K562 (cell line): ENCODE measurements at regions of chr18 and their contacts with region 1.

Region 1: DNA sequence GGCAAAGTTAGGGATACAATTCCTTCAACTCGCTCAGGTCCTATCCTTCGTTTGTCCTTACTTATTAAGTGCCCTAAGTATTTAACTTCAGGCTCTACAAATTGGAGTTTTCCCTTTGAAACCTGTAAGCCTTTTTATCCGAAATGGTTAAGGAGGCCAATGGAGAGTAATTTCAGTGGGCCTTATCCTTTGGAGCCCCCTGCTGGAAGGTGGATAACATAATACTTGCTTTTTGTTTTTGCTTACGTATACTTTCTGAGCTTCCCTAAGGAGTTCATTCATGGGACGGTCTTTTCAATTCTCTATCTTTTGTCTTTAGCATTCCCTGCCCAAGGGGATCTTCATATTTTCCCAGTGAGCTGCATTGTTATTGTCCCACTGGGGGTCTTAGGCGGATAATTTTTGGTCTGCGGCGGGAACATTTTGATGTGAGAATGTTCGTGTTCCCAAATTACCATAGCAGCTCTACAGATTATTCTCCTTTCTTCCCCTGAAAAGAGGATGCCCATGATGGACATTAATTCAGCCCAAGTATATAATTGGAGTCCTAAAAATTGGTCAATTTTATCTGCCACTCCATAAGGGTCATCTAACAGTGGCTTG is 34.4 kb upstream of the TRAPPC8 start:
- DNase-seq: peak; percentile 60 to 76 (median 61)
- ATAC-seq: peak; percentile 95
- H3K4me3 ChIP-seq: no peak overlapping the region
- H3K27ac ChIP-seq: no peak overlapping the region
- H3K4me1 ChIP-seq: no peaks in the 10 kb centered on the region
- H3K27me3 ChIP-seq: peaks cover 0 to 4% of the 10 kb centered on the region in 2 experiments; a peak in 1 of 5 replicates
- CTCF ChIP-seq: peak; percentile 63 to 93 (median 77); a peak in 5 of 6 replicates
- EP300 ChIP-seq: no peak
- POLR2A ChIP-seq: no peak
- RAD21 ChIP-seq: peak; percentile 80 to 94

Region 2: GRCh38 chr18:31722369-31722957 is 254.9 kb before region 1 on chr18:
- CTCF ChIA-PET with region 1: no interaction called
- POLR2A ChIA-PET with region 1: no interaction called
- in situ Hi-C with region 1: no loop called
- intact Hi-C with region 1: loop called (anchors 5 kb)
- DNase-seq: peak; percentile 75 to 87 (median 80)
- ATAC-seq: peak; percentile 98
- H3K4me3 ChIP-seq: no peak overlapping the region
- H3K27ac ChIP-seq: no peak overlapping the region
- H3K4me1 ChIP-seq: peaks cover 0 to 6% of the 10 kb centered on the region in 2 experiments; a peak in 1 of 5 replicates
- H3K27me3 ChIP-seq: peaks cover 9 to 22% of the 10 kb centered on the region in 2 experiments; a peak in 4 of 5 replicates
- CTCF ChIP-seq: peak; percentile 79 to 91 (median 84)
- EP300 ChIP-seq: no peak
- POLR2A ChIP-seq: no peak
- RAD21 ChIP-seq: peak; percentile 79 to 90

Region 3: DNA sequence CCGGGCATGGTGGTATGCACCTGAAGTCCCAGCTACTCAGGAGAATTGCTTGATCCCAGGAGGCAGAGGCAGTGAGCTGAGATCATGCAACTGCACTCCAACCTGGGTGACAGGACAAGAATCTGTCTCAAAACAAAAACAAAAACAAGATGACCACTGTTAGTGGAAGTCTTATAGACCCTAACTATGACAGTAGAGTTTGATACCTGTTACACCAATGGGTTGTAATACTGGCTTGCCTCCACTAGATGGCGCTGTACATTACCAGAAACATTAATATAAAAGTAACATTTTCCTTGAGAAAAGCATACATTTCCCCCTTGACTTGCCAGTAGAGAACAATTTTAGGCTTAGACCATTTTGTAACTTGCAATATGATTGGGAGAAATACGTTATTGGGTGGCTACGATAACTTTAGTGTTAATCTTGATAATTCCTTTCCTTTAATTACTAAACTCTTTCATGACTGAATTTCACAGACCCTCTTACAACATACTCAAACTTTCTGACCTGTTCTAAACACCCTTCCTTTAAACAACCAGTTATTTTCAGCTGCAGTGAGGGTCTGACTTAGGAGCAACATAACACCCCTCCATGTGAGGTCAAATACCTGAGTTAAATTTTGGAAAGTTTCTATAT is 236.2 kb before region 1 on chr18:
- CTCF ChIA-PET with region 1: interaction called, 3 read pairs
- POLR2A ChIA-PET with region 1: no interaction called
- in situ Hi-C with region 1: no loop called
- intact Hi-C with region 1: loop called (anchors 1 kb)
- DNase-seq: peak; percentile 31 to 66 (median 33)
- ATAC-seq: peak; percentile 70
- H3K4me3 ChIP-seq: no peak overlapping the region
- H3K27ac ChIP-seq: no peak overlapping the region
- H3K4me1 ChIP-seq: peaks cover 0 to 7% of the 10 kb centered on the region in 2 experiments; a peak in 2 of 5 replicates
- H3K27me3 ChIP-seq: peaks cover under 1 to 8% of the 10 kb centered on the region in 2 experiments; a peak in 3 of 5 replicates
- CTCF ChIP-seq: peak; percentile 46 to 85 (median 82)
- EP300 ChIP-seq: no peak
- POLR2A ChIP-seq: no peak
- RAD21 ChIP-seq: peak; percentile 62 to 82

Region 4: DNA sequence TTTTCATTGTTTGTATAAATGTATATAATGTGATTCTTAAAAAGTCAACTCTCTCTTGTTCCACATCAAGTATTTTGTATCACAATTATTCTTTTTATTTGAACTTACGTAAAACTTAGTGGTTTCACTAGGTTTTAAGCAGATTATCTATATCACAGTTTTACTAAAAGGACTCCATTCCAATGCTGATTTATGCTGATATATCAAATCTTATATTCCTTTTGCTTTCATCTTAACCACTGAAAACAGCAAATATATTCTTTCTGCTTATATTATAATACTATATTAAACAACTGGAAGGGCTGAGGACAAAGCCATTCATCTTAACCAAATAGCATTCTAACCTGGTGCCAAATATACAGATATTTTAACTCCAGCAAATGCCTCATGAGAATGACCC is 58.6 kb before region 1 on chr18:
- CTCF ChIA-PET with region 1: no interaction called
- POLR2A ChIA-PET with region 1: no interaction called
- in situ Hi-C with region 1: no loop called
- intact Hi-C with region 1: loop called (anchors 10 kb)
- DNase-seq: no peak
- ATAC-seq: no peak
- H3K4me3 ChIP-seq: no peak overlapping the region
- H3K27ac ChIP-seq: no peak overlapping the region
- H3K4me1 ChIP-seq: no peaks in the 10 kb centered on the region; a peak in 1 of 5 replicates
- H3K27me3 ChIP-seq: no peaks in the 10 kb centered on the region
- CTCF ChIP-seq: no peak
- EP300 ChIP-seq: no peak
- POLR2A ChIP-seq: no peak
- RAD21 ChIP-seq: no peak

Region 5: DNA sequence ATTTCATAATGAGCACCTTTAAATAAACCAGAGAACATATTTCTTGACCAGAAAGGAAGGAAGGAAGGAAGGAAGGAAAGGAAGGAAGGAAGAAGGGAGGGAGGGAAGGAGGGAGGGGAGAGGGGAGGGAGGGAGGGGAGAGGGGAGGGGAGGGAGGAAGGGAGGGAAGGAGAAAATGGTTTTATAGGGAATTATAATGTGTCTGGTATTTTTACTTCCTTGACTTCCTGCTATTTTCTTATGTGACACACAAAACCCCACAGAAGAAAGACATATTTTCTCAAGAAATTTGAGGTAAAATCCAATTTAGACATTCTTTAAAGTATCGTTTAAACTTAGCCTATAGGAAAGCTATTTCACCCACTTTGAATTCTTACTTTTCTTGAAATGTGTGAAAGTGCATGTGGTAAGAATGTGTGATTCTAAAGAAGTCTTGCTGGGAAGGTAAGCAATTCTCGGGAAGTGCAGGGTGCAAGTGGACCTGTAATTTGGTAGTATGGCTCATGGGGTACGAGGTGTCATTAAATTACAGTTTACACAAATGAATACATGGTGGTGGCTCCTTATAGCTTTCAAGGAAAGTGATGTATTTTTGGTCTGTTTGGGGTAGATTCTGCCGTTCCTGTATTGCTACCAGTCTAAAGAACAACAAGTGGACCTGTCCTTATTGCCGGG is 59.3 kb after region 1 on chr18:
- CTCF ChIA-PET with region 1: no interaction called
- POLR2A ChIA-PET with region 1: no interaction called
- in situ Hi-C with region 1: no loop called
- intact Hi-C with region 1: no loop called
- DNase-seq: no peak
- ATAC-seq: no peak
- H3K4me3 ChIP-seq: no peak overlapping the region
- H3K27ac ChIP-seq: no peak overlapping the region
- H3K4me1 ChIP-seq: no peaks in the 10 kb centered on the region
- H3K27me3 ChIP-seq: peaks cover 19 to 26% of the 10 kb centered on the region in 2 experiments; a peak in 4 of 5 replicates
- CTCF ChIP-seq: no peak
- EP300 ChIP-seq: no peak
- POLR2A ChIP-seq: no peak
- RAD21 ChIP-seq: no peak